ENCODE measurements at regions of chr13 and their contacts with region 1.

Region 1: DNA sequence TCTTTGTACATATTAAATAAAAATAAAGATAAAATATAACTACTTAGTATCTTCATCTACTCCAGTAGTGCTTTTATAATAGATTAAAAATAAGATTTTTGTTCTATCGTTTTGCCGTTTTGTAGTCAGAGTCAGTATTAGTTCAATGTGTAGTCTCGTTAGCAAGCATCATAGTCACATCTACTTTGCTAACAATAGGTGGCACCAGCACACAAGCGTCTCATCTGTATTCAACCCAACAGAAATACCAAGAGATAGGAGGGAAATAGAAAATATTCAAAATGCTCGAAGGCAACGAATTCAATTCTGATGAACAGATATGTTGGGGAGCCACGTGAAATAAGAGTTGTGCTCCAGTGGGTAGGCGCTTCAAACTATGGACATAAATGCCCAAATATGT is 21.4 kb upstream of the MICU2 start:
- DNase-seq: peak; percentile 14
- H3K4me3 Mint-ChIP-seq: no peak overlapping the region
- H3K27ac Mint-ChIP-seq: no peak overlapping the region
- H3K4me1 Mint-ChIP-seq: no peaks in the 10 kb centered on the region
- H3K27me3 Mint-ChIP-seq: peaks cover 18% of the 10 kb centered on the region
- CTCF ChIP-seq: no peak

Region 2: GRCh38 chr13:21526707-21527540 is 98.4 kb before region 1 on chr13:
- CTCF ChIA-PET with region 1: no interaction called
- intact Hi-C with region 1: no loop called
- DNase-seq: no peak
- H3K4me3 Mint-ChIP-seq: no peak overlapping the region
- H3K27ac Mint-ChIP-seq: no peak overlapping the region
- H3K4me1 Mint-ChIP-seq: no peaks in the 10 kb centered on the region
- H3K27me3 Mint-ChIP-seq: no peaks in the 10 kb centered on the region
- CTCF ChIP-seq: no peak

Region 3: DNA sequence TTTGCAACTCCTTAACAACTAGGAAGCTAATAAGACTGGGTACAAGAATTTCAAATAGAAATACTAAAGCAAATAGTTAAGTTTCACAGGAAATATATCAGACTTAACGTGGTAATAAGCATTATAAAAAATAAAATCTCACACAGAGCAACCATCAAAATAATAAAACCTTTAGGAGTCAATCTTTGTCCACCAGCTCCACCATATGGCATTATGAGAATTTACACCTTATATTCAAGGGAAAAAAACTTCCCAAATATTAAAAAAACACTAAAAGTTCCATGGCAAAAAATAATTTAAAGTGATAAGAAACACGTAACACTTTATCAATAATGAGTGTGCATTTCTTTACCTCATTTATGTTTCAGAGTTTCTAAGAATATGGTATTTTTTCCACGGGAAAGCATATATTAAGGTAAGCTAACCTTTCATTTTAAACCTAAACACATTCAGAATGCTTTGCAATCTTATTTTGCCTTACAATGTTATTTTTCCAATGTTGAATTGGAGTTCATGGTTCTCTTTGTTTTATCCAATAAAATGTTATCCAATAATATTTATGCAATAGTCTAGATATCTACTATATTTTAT is 1132.3 kb after region 1 on chr13:
- CTCF ChIA-PET with region 1: no interaction called
- intact Hi-C with region 1: loop called (anchors 2 kb)
- DNase-seq: no peak
- H3K4me3 Mint-ChIP-seq: no peak overlapping the region
- H3K27ac Mint-ChIP-seq: no peak overlapping the region
- H3K4me1 Mint-ChIP-seq: no peaks in the 10 kb centered on the region
- H3K27me3 Mint-ChIP-seq: no peaks in the 10 kb centered on the region
- CTCF ChIP-seq: no peak